ENCODE measurements at regions of chr7 and their contacts with region 1.

Region 1: DNA sequence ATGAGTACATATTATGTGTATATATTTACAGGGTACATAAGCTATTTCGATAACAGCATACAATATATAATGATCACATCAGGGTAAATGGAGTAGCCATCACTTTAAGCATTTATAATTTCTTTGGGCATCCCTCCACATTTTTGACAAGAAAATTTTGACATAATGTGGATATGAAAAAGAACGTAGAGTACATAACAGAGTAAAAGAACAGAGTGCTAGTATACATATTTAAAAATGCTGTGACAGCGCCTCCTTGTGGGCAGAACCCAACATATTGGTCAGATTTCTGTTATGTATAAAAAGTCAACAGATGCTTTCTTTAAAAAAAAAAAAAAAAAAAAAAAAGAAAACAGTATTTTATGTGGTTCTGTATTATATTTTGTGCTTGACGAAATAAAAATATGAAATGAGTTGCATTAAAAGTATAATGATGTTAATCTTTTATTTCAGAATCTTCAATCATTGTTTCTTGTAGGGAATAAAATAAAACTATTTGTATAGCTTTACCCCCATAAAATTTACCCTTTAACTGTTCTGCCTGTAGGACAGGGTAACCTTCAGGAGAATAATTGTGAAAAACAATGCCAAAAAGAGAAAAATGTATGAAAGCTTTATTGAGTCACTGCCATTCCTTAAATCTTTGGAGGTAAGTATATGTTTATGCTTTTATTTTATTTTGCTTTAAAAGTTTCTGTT is 18.3 kb upstream of the HBP1 start:
- DNase-seq: peak in 5 of 6 donors; percentile 46 to 78 (median 62)
- ATAC-seq: peak; percentile 64 to 85 (median 81)
- H3K4me3 ChIP-seq: no peak overlapping the region
- H3K27ac ChIP-seq: no peak overlapping the region
- H3K4me1 ChIP-seq: no peaks in the 10 kb centered on the region
- H3K27me3 ChIP-seq: no peaks in the 10 kb centered on the region
- CTCF ChIP-seq: peak; percentile 20 to 55 (median 44)

Region 2: GRCh38 chr7:106793015-106793975 is 357.2 kb before region 1 on chr7:
- intact Hi-C with region 1: loop called in 2 of 3 experiments (anchors 5 to 10 kb)
- DNase-seq: no peak
- ATAC-seq: peak in 3 of 4 donors; percentile 59 to 72 (median 65)
- H3K4me3 ChIP-seq: no peak overlapping the region
- H3K27ac ChIP-seq: no peak overlapping the region
- H3K4me1 ChIP-seq: no peaks in the 10 kb centered on the region
- H3K27me3 ChIP-seq: no peaks in the 10 kb centered on the region
- CTCF ChIP-seq: peak in 3 of 4 donors; percentile 49 to 59 (median 51)

Region 3: GRCh38 chr7:106947244-106947728 is 203.2 kb before region 1 on chr7:
- intact Hi-C with region 1: loop called in 2 of 3 experiments (anchors 10 kb)
- DNase-seq: peak in 1 of 6 donors; percentile 19
- ATAC-seq: peak in 3 of 4 donors; percentile 80 to 85 (median 85)
- H3K4me3 ChIP-seq: no peak overlapping the region
- H3K27ac ChIP-seq: no peak overlapping the region
- H3K4me1 ChIP-seq: no peaks in the 10 kb centered on the region
- H3K27me3 ChIP-seq: peaks cover 0 to 3% (median 0%) of the 10 kb centered on the region in 4 donors
- CTCF ChIP-seq: peak in 2 of 4 donors; percentile 35

Region 4: GRCh38 chr7:106959753-106960152 is 190.8 kb before region 1 on chr7:
- intact Hi-C with region 1: loop called in 1 of 3 experiments (anchors 10 kb)
- DNase-seq: no peak
- ATAC-seq: no peak
- H3K4me3 ChIP-seq: no peak overlapping the region
- H3K27ac ChIP-seq: no peak overlapping the region
- H3K4me1 ChIP-seq: no peaks in the 10 kb centered on the region
- H3K27me3 ChIP-seq: no peaks in the 10 kb centered on the region
- CTCF ChIP-seq: no peak

Region 5: GRCh38 chr7:107344799-107345198 is 194.3 kb after region 1 on chr7:
- intact Hi-C with region 1: no loop called
- DNase-seq: no peak
- ATAC-seq: no peak
- H3K4me3 ChIP-seq: no peak overlapping the region
- H3K27ac ChIP-seq: no peak overlapping the region
- H3K4me1 ChIP-seq: no peaks in the 10 kb centered on the region
- H3K27me3 ChIP-seq: no peaks in the 10 kb centered on the region
- CTCF ChIP-seq: no peak

Region 6: GRCh38 chr7:107384025-107384424 is 233.5 kb after region 1 on chr7:
- intact Hi-C with region 1: no loop called
- DNase-seq: no peak
- ATAC-seq: no peak
- H3K4me3 ChIP-seq: no peak overlapping the region
- H3K27ac ChIP-seq: no peak overlapping the region
- H3K4me1 ChIP-seq: no peaks in the 10 kb centered on the region
- H3K27me3 ChIP-seq: no peaks in the 10 kb centered on the region
- CTCF ChIP-seq: no peak

Region 7: GRCh38 chr7:107394831-107395230 is 244.3 kb after region 1 on chr7:
- intact Hi-C with region 1: no loop called
- DNase-seq: no peak
- ATAC-seq: no peak
- H3K4me3 ChIP-seq: no peak overlapping the region
- H3K27ac ChIP-seq: no peak overlapping the region
- H3K4me1 ChIP-seq: peaks cover 0 to 3% (median 0%) of the 10 kb centered on the region in 3 donors
- H3K27me3 ChIP-seq: no peaks in the 10 kb centered on the region
- CTCF ChIP-seq: no peak